Kidney (tissue), 22 donors: ENCODE measurements at regions of chr18 and their contacts with region 1.

Region 1: DNA sequence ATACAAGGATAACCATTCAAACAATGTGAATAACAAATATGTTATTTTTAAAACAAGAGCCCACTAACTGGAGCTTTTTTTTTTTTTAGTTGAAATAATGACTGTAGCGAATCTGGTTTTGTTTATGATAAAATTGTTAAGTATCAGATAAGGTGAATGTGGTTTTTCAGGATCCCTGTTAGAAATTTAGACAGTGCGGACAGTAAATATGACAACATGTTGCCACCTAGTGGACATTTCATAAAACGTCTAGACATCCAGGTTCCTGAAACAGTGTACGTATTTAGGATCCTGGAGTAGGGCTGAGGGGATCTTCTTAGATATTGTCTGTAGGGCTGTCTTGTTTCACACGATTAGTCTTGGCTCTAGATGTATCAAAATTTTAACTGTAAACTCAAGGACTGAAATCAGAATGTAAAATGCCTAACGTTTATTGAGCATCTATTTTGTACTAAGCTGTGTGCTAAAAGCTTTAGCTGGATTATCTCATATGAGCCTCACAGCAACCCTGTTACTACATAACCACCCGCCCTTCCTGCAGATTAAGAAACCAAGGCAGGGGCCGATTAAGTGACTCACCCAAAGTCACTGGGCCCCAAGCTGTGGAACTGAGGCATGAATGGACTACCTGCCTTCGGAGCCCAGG is 23.9 kb upstream of the CCDC68 start:
- DNase-seq: peak in 2 of 5 donors; percentile 61 to 76
- H3K4me3 ChIP-seq: no peak overlapping the region
- H3K27ac ChIP-seq: no peak overlapping the region
- H3K4me1 ChIP-seq: no peaks in the 10 kb centered on the region
- H3K27me3 ChIP-seq: no peaks in the 10 kb centered on the region
- CTCF ChIP-seq: peak; percentile 68

Region 2: GRCh38 chr18:54679318-54680149 is 303.6 kb before region 1 on chr18:
- intact Hi-C with region 1: loop called (anchors 10 kb)
- DNase-seq: peak in 2 of 5 donors; percentile 77 to 86
- H3K4me3 ChIP-seq: no peak overlapping the region
- H3K27ac ChIP-seq: no peak overlapping the region
- H3K4me1 ChIP-seq: no peaks in the 10 kb centered on the region
- H3K27me3 ChIP-seq: no peaks in the 10 kb centered on the region
- CTCF ChIP-seq: peak; percentile 48